Common myeloid progenitor, CD34-positive (primary cell): ENCODE measurements at regions of chr5 and their contacts with region 1.

Region 1: GRCh38 chr5:14399054-14399692 is 182.4 kb upstream of the OTULINL start:
- DNase-seq: peak; percentile 36 to 70 (median 59)
- H3K4me3 ChIP-seq: no peak overlapping the region
- H3K27ac ChIP-seq: no peak overlapping the region
- H3K4me1 ChIP-seq: no peaks in the 10 kb centered on the region
- H3K27me3 ChIP-seq: no peaks in the 10 kb centered on the region

Region 2: GRCh38 chr5:14386884-14387624 is 12.1 kb before region 1 on chr5:
- CTCF ChIA-PET with region 1: interaction called, 12 read pairs
- POLR2A ChIA-PET with region 1: no interaction called
- DNase-seq: no peak
- H3K4me3 ChIP-seq: no peak overlapping the region
- H3K27ac ChIP-seq: no peak overlapping the region
- H3K4me1 ChIP-seq: no peaks in the 10 kb centered on the region
- H3K27me3 ChIP-seq: no peaks in the 10 kb centered on the region

Region 3: GRCh38 chr5:14650052-14650451 is 250.9 kb after region 1 on chr5:
- CTCF ChIA-PET with region 1: interaction called, 82 read pairs
- POLR2A ChIA-PET with region 1: no interaction called
- DNase-seq: no peak
- H3K4me3 ChIP-seq: no peak overlapping the region
- H3K27ac ChIP-seq: no peak overlapping the region
- H3K4me1 ChIP-seq: no peaks in the 10 kb centered on the region
- H3K27me3 ChIP-seq: peaks cover 0 to 2% (median 0%) of the 10 kb centered on the region in 5 experiments

Region 4: GRCh38 chr5:14655146-14655741 is 256.1 kb after region 1 on chr5:
- CTCF ChIA-PET with region 1: interaction called, 82 read pairs
- POLR2A ChIA-PET with region 1: no interaction called
- DNase-seq: no peak
- H3K4me3 ChIP-seq: no peak overlapping the region
- H3K27ac ChIP-seq: no peak overlapping the region
- H3K4me1 ChIP-seq: peaks cover 0 to 2% (median under 1%) of the 10 kb centered on the region in 4 experiments
- H3K27me3 ChIP-seq: peaks cover 0 to 2% (median 0%) of the 10 kb centered on the region in 5 experiments